ENCODE measurements at regions of chr10 and their contacts with region 1.

Region 1: GRCh38 chr10:123967396-123968243 is 76.0 kb upstream of the CPXM2 start:
- DNase-seq: peak; percentile 44 to 75
- H3K4me3 ChIP-seq: no peak overlapping the region
- H3K27ac ChIP-seq: peak overlapping the region in 1 of 2 donors; percentile 38
- H3K4me1 ChIP-seq: peaks cover 0 to 10% of the 10 kb centered on the region in 2 donors
- H3K27me3 ChIP-seq: peaks cover 2 to 19% of the 10 kb centered on the region in 2 donors
- CTCF ChIP-seq: peak; percentile 66 to 88 (median 82)
- POLR2A ChIP-seq: no peak

Region 2: GRCh38 chr10:123582084-123582989 is 385.3 kb before region 1 on chr10:
- intact Hi-C with region 1: loop called (anchors 5 kb)
- DNase-seq: peak; percentile 35 to 71
- H3K4me3 ChIP-seq: no peak overlapping the region
- H3K27ac ChIP-seq: no peak overlapping the region
- H3K4me1 ChIP-seq: peaks cover 0 to 5% of the 10 kb centered on the region in 2 donors
- H3K27me3 ChIP-seq: no peaks in the 10 kb centered on the region
- CTCF ChIP-seq: peak; percentile 53 to 70 (median 56)
- POLR2A ChIP-seq: no peak

Region 3: DNA sequence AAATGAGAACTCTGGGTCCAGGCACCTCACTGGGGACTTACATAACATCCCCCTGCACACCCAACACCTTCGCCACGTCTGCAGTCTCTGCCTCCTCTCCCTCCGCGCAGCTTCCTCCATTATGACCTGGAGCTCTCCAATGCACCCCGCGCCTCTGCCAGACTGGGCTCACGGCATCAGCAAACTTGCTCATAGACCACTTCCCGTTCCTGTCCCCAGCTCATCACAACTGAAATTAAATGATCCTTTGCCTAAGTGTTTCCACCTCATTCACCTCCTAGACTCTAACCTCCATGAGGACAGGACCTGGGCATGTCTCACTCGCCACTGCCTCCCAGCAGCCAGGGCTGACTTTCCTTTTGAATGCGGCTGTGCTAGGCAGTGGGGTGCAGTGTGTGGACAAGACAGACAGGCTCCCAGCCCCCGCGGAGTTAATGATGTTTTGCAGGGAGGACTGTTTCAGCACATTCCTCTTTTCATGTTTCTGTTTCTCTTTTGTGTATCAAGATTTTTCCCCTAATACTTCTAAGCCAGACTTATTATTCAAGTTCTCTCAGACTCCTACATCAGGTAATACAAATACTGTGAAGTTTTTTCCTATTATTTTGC is 107.0 kb after region 1 on chr10:
- intact Hi-C with region 1: no loop called
- DNase-seq: no peak
- H3K4me3 ChIP-seq: no peak overlapping the region
- H3K27ac ChIP-seq: peak overlapping the region; percentile 66 to 69
- H3K4me1 ChIP-seq: no peaks in the 10 kb centered on the region
- H3K27me3 ChIP-seq: no peaks in the 10 kb centered on the region
- CTCF ChIP-seq: no peak
- POLR2A ChIP-seq: no peak

Measured in uterus (tissue), 4 donors.